Right cardiac atrium (tissue), 5 donors: ENCODE measurements at regions of chr1 and their contacts with region 1.

Region 1: GRCh38 chr1:232630047-232630893 is at the start of gene SIPA1L2:
- DNase-seq: peak; percentile 95 to 98 (median 98)
- ATAC-seq: peak; percentile 98 to 99
- H3K4me3 ChIP-seq: peak within 1 kb of the TSS; percentile 97
- H3K27ac ChIP-seq: peak within 1 kb of the TSS; percentile 94
- H3K4me1 ChIP-seq: peaks cover 3% of the 10 kb centered on the region
- H3K27me3 ChIP-seq: no peaks in the 10 kb centered on the region
- total RNA-seq, gene SIPA1L2: 90.2 to 117 (median 107) TPM

Region 2: DNA sequence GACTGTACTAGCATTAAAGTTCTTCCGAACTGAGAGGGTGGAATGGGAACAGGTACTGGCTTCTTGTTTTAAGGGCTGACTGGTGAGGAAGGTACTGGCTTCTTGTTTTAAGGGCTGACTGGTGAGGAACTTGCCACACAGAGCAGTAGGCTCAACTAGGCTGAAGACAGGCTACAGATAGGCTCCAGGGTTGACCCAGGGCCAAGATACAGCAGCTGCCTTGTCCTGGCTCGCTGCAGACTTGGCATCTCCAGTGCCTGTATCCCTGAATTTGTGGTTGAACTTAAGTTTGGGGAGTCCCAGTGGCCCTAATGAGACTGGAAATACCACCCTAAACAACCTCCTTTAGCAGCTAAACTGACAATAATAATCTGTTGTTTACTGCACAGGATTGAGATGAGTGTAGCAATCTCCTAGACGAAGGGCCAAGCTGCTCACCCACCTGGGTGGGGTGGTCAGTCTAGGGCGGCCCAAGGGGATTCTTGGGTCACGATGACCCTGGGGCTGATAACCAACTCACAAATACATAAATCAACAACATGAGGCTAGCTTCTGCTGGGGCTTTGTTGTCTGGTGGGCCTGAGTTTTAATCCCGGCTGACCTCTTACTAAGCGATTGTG is 776.6 kb before region 1 on chr1:
- intact Hi-C with region 1: loop called in 2 of 4 experiments (anchors 5 kb)
- DNase-seq: peak; percentile 38 to 82 (median 81)
- ATAC-seq: peak; percentile 36 to 51
- H3K4me3 ChIP-seq: no peak overlapping the region
- H3K27ac ChIP-seq: no peak overlapping the region
- H3K4me1 ChIP-seq: peaks cover 7% of the 10 kb centered on the region
- H3K27me3 ChIP-seq: no peaks in the 10 kb centered on the region

Region 3: DNA sequence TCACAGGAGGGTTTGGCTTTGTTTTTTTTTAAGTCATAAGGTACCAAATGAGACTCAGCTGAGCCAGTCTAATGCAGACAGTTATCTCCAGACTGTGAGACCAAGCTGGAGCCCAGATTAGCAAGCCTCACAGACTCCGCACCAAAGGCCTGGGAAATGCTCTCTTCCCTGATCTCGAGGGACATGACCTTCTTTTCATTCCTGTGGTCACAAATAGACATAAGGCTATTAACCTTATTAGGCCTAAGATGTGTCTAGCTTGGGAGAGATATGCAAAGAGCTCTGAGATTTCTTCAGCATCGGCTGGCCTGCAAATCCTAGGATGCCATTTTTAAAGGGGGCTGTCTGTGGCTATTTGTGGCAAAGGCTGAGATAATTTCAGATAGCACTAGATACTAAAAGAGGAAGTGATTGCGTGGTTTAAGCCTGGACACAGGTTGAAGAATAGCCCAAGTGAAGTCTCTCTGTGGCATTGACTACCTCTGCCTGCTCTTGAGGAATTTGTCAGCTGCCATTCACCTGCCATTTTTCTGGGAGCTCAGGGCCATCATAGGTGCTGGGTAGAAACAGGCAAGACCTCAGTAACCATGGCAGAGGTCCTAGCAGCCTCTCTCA is 301.7 kb before region 1 on chr1:
- intact Hi-C with region 1: loop called in 1 of 4 experiments (anchors 10 kb)
- DNase-seq: no peak
- ATAC-seq: peak in 1 of 2 donors; percentile 41
- H3K4me3 ChIP-seq: no peak overlapping the region
- H3K27ac ChIP-seq: peak overlapping the region; percentile 82
- H3K4me1 ChIP-seq: peaks cover 3% of the 10 kb centered on the region
- H3K27me3 ChIP-seq: no peaks in the 10 kb centered on the region

Region 4: DNA sequence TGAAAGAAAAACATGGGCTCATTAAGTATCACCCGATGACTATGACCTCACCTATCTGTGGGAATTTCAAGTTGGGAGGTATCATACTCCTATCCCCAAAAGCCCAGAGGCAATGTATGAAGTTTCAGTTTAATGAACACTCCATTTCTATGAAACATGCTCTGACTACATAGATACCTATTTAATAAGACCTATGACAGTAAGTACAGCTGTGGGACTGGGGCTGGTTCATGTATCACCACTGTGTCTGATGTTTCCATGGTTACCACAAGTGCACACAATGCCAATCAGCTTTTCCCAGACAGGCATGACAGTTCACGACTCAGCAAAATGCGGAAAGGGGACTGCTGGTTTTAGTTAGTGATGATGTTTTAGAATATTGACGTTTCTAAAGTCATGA is 168.1 kb before region 1 on chr1:
- intact Hi-C with region 1: loop called in 1 of 4 experiments (anchors 10 kb)
- DNase-seq: no peak
- ATAC-seq: peak in 1 of 2 donors; percentile 42
- H3K4me3 ChIP-seq: no peak overlapping the region
- H3K27ac ChIP-seq: no peak overlapping the region
- H3K4me1 ChIP-seq: peaks cover 4% of the 10 kb centered on the region
- H3K27me3 ChIP-seq: no peaks in the 10 kb centered on the region

Region 5: DNA sequence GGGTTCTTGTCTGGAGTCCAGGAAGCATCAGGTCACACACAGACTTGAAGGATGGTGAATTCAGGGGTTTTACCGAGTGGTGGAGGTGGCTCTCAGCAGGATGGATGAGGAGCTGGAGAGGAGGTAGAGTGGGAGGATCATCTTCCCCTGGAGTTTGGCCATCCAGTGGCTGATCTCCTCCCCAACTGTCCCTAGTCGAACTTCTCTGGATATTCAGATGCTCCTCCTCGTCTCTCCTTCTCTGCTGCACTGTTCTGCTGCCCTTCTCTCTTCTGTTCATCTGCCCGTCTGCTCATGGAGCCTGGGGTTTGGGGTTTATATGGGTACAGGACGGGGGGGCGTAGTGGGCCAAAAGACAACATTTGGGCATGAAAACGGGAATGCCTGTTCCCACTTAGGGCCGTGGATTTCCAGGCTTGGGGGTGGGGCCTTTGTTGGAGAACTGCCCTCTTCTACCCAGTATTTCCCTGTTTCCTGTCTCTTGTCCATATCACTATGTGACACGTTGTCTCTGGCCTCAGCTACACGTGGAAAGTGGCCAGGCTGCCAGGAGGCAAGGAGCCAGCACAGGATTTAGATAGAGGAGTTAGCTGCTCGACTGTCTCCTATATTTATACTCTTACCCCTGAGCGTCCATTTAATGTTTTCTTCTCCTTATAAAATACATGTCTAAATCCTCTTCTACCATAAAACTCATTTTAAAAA is 77.1 kb before region 1 on chr1:
- intact Hi-C with region 1: loop called in 2 of 4 experiments (anchors 10 kb)
- DNase-seq: peak; percentile 77 to 93 (median 92)
- ATAC-seq: peak; percentile 88 to 92
- H3K4me3 ChIP-seq: no peak overlapping the region
- H3K27ac ChIP-seq: peak overlapping the region; percentile 63
- H3K4me1 ChIP-seq: peaks cover 12% of the 10 kb centered on the region
- H3K27me3 ChIP-seq: no peaks in the 10 kb centered on the region

Region 6: GRCh38 chr1:232748910-232749368 is 118.7 kb after region 1 on chr1:
- intact Hi-C with region 1: no loop called
- DNase-seq: no peak
- ATAC-seq: no peak
- H3K4me3 ChIP-seq: no peak overlapping the region
- H3K27ac ChIP-seq: no peak overlapping the region
- H3K4me1 ChIP-seq: no peaks in the 10 kb centered on the region
- H3K27me3 ChIP-seq: no peaks in the 10 kb centered on the region

Region 7: DNA sequence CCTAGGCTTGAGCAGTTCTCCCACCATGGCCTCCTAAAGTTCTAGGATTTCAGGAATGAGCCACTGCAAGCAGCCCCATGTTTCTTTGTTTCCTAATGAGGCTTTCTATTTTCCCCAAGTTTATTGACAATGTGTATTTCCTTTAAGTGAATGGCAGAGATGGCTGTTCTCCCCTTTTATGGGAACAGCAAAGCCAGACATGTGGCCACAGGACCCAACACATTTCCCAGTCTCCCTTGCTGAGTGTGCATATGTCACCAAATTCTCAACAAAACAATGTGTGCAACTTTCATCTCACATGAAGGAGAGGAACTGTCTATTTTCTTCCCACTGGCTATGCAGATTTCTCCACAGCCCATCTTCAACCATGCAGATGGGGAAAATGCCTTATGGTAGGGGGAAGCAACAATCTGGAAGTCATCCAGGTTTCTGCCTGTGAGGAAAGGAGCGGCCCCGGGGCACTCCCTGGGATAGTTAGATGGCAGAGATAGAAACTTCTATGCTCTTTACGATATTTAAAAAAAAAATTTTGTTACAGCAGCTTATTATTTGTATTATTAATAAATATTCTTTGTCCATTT is 146.3 kb after region 1 on chr1:
- intact Hi-C with region 1: no loop called
- DNase-seq: no peak
- ATAC-seq: no peak
- H3K4me3 ChIP-seq: no peak overlapping the region
- H3K27ac ChIP-seq: no peak overlapping the region
- H3K4me1 ChIP-seq: no peaks in the 10 kb centered on the region
- H3K27me3 ChIP-seq: no peaks in the 10 kb centered on the region

Region 8: GRCh38 chr1:232968965-232969364 is 338.7 kb after region 1 on chr1:
- intact Hi-C with region 1: loop called in 1 of 4 experiments (anchors 10 kb)
- DNase-seq: peak; percentile 42 to 73 (median 71)
- ATAC-seq: peak; percentile 78 to 83
- H3K4me3 ChIP-seq: no peak overlapping the region
- H3K27ac ChIP-seq: no peak overlapping the region
- H3K4me1 ChIP-seq: peaks cover 7% of the 10 kb centered on the region
- H3K27me3 ChIP-seq: no peaks in the 10 kb centered on the region

Region 9: DNA sequence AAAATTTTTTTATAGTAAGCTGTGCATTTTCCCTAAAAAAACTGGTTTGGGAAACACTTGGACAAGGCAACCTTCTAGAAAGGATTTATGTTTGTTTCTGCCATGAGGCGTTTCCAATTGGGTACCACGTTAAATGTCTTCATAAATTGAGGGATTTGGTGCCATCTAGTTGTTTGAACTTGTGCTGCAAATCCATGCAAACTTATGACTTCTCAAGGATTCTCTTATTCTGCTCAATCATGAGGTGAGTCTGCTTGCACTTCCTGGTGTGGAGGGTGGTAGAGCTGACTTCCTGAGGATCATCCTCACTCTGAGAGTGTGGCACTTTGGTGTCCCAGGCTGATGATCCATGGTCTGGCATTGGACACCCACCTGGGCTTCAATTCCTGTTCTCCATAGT is 542.0 kb after region 1 on chr1:
- intact Hi-C with region 1: loop called in 2 of 4 experiments (anchors 5 to 10 kb)
- DNase-seq: no peak
- ATAC-seq: peak in 1 of 2 donors; percentile 31
- H3K4me3 ChIP-seq: no peak overlapping the region
- H3K27ac ChIP-seq: no peak overlapping the region
- H3K4me1 ChIP-seq: no peaks in the 10 kb centered on the region
- H3K27me3 ChIP-seq: no peaks in the 10 kb centered on the region